ENCODE measurements at regions of chr7 and their contacts with region 1.

Region 1: DNA sequence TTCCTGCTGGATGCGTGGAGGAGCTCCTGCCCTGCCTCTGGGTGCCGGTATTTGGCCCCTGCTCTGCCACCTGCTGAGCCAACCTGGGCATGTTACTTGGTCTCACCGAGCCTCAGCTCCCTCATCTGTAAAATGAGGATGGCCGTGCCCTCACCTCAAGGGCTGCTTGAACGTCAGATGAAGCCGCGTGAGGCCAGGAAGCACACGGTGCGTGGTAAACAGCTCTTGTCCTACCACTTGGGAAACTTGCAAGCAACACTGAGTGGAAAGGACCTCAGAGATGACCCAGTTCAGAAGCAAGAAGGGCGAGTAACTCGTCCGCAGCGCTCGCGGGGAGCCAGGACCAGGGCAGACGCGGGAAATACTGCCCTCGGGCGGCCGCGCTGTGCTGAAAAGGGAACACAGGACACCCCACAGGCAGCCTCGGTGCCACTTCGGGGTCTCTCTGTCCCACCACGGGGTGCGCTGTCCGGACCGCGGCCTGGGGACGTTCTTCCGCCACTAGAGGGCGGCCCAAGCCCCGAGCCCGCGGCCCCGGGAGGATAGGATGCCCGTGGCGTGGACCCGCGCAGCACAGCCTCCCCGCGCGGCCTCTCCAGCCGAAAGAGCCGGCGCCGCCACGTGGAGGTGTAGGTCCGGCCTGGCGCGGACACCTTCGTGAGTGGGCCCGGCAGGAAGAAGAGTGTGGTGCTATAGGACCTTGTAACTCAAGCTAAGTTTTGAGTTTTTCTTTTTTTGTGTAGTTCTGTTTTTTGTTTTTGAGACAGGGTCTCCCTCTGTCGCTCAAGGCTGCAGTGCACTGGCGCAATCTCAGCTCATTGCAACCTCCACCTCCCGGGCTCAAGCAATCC is 94.1 kb downstream of the PRKAG2 start:
- DNase-seq: peak; percentile 86 to 92 (median 91)
- H3K4me3 ChIP-seq: peak overlapping the region in 4 of 7 experiments; percentile 45 to 74 (median 46)
- H3K27ac ChIP-seq: no peak overlapping the region
- H3K4me1 ChIP-seq: peaks cover 0 to 20% (median 10%) of the 10 kb centered on the region in 4 experiments
- H3K27me3 ChIP-seq: no peaks in the 10 kb centered on the region

Region 2: GRCh38 chr7:151612374-151613160 is 170.3 kb before region 1 on chr7:
- CTCF ChIA-PET with region 1: no interaction called
- POLR2A ChIA-PET with region 1: no interaction called
- DNase-seq: no peak
- H3K4me3 ChIP-seq: no peak overlapping the region
- H3K27ac ChIP-seq: no peak overlapping the region
- H3K4me1 ChIP-seq: no peaks in the 10 kb centered on the region
- H3K27me3 ChIP-seq: no peaks in the 10 kb centered on the region

Region 3: DNA sequence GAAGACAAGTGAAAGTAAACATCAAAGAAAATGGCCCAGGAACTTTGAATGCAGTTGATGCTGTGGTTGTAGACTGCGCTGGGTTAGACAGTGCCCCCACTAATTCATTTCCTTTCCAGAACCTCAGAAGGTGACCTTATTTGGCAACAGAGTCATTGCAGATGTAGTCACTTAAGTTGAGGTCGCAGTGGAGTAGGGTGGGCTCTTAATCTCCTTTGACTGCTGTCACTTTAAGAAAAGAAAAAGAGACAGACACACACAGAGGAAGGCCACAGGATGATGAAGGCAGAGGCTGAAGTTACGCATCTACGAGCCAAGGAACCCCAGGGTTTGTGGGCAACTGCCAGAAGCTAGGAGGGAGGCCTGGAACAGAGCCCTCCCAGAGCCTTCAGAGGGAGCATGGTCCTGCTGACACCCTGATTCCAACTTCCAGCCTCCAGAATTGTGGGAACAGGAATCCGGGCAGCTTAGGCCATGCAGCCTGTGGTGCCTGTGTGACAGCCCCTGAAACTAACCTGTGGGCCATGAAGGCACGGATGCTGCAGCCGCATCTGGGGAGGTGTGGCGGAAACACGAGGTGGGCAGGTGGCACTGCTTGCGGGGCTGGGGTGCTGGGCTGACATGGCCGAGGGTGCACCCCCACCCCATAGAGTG is 13.5 kb before region 1 on chr7:
- CTCF ChIA-PET with region 1: interaction called, 29 read pairs
- POLR2A ChIA-PET with region 1: no interaction called
- DNase-seq: peak in 1 of 3 donors; percentile 27
- H3K4me3 ChIP-seq: no peak overlapping the region
- H3K27ac ChIP-seq: no peak overlapping the region
- H3K4me1 ChIP-seq: no peaks in the 10 kb centered on the region
- H3K27me3 ChIP-seq: no peaks in the 10 kb centered on the region

Region 4: GRCh38 chr7:151795168-151795811 is 12.5 kb after region 1 on chr7:
- CTCF ChIA-PET with region 1: interaction called, 48 read pairs
- POLR2A ChIA-PET with region 1: no interaction called
- DNase-seq: no peak
- H3K4me3 ChIP-seq: no peak overlapping the region
- H3K27ac ChIP-seq: no peak overlapping the region
- H3K4me1 ChIP-seq: peaks cover 0 to 11% (median 0%) of the 10 kb centered on the region in 4 experiments
- H3K27me3 ChIP-seq: no peaks in the 10 kb centered on the region

Region 5: DNA sequence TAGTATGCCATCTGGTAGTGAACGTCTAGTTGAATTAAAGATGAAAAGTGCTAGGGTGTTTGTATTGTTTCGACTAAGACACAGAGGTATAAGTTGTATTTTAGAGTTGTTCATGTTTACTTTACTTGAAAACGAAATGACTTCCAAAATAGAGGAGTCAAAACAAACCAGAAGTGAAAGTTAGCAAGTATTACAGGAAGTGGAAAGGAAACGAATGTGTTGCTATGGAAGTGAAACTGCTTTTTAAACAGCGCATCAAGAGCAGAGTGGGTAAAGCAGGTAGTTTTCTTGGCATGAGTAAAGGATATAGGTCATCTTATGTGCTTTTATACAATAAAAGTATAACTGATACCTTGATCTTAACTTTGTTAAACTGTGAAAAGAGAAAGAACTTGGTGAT is 153.4 kb after region 1 on chr7:
- CTCF ChIA-PET with region 1: interaction called, 11 read pairs
- POLR2A ChIA-PET with region 1: no interaction called
- DNase-seq: peak; percentile 45 to 85 (median 79)
- H3K4me3 ChIP-seq: peak overlapping the region in 4 of 7 experiments; percentile 10 to 57 (median 22)
- H3K27ac ChIP-seq: peak overlapping the region in 1 of 2 experiments; percentile 67
- H3K4me1 ChIP-seq: peaks cover 0 to 18% (median 15%) of the 10 kb centered on the region in 4 experiments
- H3K27me3 ChIP-seq: no peaks in the 10 kb centered on the region

Region 6: GRCh38 chr7:152202056-152202455 is 419.2 kb after region 1 on chr7:
- CTCF ChIA-PET with region 1: no interaction called
- POLR2A ChIA-PET with region 1: no interaction called
- DNase-seq: no peak
- H3K4me3 ChIP-seq: no peak overlapping the region
- H3K27ac ChIP-seq: no peak overlapping the region
- H3K4me1 ChIP-seq: no peaks in the 10 kb centered on the region
- H3K27me3 ChIP-seq: no peaks in the 10 kb centered on the region

Measured in common myeloid progenitor, CD34-positive (primary cell).